Activated CD4-positive, alpha-beta memory T cell treated with anti-CD3 and anti-CD28 coated beads for 36 hours (primary cell): ENCODE measurements at regions of chrX and their contacts with region 1.

Region 1: DNA sequence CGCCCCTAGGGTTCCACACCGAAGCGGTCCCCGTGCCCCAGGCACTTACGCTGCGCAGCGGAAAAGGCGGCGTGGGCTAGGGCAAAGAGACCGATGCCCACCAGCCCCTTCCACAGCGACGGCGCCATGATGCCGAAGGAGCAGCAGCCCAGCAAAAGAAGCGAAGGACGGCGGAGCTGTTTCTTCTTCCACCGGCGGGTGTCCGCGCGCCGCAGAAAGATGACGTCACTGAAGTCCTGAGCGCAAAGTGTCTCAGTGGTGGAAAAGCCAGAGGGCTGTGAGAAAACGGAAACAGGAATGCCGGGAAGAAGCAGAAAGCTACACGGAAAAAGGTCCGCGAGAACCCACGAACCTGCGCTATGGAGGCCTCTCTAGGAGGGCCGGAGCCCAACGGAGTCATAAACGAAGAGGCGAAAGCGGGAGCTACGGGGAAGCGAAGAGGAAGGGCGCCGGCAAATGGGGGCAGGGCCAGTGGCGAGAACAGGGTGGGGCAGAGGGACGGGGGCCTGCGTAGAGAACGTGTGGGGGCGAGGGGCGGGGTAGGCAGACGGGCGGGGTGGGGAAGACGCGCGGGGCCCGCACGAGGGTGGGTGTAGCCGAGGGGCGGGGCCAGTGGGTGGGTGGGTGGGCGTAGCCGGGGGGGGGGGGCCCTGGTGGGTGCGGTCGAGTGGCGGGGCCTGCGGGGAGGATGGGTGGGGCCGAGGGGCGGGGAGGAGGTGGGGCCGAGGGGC is at the start of gene MMGT1:
- DNase-seq: peak; percentile 89
- H3K4me3 Mint-ChIP-seq: peak within 1 kb of the TSS; percentile 93
- H3K27ac Mint-ChIP-seq: peak within 1 kb of the TSS; percentile 93
- H3K4me1 Mint-ChIP-seq: peaks cover 37% of the 10 kb centered on the region
- H3K27me3 Mint-ChIP-seq: no peaks in the 10 kb centered on the region
- total RNA-seq, gene MMGT1: 20.6 to 21.4 TPM

Region 2: DNA sequence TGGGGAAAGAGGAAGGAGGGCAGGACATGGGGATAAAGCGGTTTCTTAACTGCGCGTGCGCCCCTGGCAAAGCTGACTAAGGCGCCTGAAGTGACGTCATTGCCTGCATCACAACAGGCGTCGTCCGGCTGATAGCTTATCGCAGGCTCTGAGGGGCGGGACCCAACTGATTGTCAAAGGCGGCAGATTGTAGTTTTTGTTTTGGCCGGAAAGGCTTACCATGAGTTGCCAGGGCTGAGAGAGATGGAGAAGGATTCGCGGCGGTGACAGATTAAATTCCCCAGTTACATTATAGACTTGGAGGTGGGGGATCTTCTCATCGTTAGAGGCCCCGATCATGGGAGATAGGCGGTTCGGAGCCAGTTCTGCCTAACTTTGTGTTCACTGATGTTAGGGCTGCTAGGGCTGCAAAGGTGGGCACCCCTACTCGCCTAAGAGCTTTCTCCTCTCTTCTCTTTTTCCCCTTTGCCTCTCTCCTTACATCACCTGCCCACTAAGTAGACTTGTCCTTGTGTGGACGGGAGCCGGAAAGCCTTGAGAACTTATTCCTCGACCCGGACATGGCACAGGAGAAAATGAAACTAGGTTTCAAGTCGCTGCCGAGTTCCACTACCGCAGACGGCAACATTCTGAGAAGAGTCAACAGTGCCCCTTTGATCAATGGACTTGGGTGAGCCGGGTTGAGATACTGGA is 1166.5 kb before region 1 on chrX:
- CTCF ChIA-PET with region 1: no interaction called
- POLR2A ChIA-PET with region 1: no interaction called
- intact Hi-C with region 1: loop called (anchors 5 kb)
- DNase-seq: peak; percentile 91
- H3K4me3 Mint-ChIP-seq: peak overlapping the region; percentile 90
- H3K27ac Mint-ChIP-seq: peak overlapping the region; percentile 93
- H3K4me1 Mint-ChIP-seq: peaks cover 20% of the 10 kb centered on the region
- H3K27me3 Mint-ChIP-seq: no peaks in the 10 kb centered on the region

Region 3: GRCh38 chrX:135985141-135985972 is 11.6 kb after region 1 on chrX and contains the start of gene SLC9A6:
- CTCF ChIA-PET with region 1: no interaction called
- POLR2A ChIA-PET with region 1: interaction called, 13 read pairs
- intact Hi-C with region 1: loop called (anchors 1 kb)
- DNase-seq: peak; percentile 77
- H3K4me3 Mint-ChIP-seq: peak within 1 kb of the TSS; percentile 89
- H3K27ac Mint-ChIP-seq: peak within 1 kb of the TSS; percentile 86
- H3K4me1 Mint-ChIP-seq: peaks cover 59% of the 10 kb centered on the region
- H3K27me3 Mint-ChIP-seq: no peaks in the 10 kb centered on the region
- total RNA-seq, gene SLC9A6: 14.3 to 14.5 TPM

Region 4: GRCh38 chrX:136065044-136065671 is 91.4 kb after region 1 on chrX:
- CTCF ChIA-PET with region 1: no interaction called
- POLR2A ChIA-PET with region 1: no interaction called
- intact Hi-C with region 1: no loop called
- DNase-seq: peak; percentile 46
- H3K4me3 Mint-ChIP-seq: peak overlapping the region; percentile 12
- H3K27ac Mint-ChIP-seq: peak overlapping the region; percentile 18
- H3K4me1 Mint-ChIP-seq: peaks cover 22% of the 10 kb centered on the region
- H3K27me3 Mint-ChIP-seq: no peaks in the 10 kb centered on the region

Region 5: GRCh38 chrX:136147315-136147901 is 173.7 kb after region 1 on chrX and contains the start of gene FHL1:
- CTCF ChIA-PET with region 1: no interaction called
- POLR2A ChIA-PET with region 1: no interaction called
- intact Hi-C with region 1: loop called (anchors 5 kb)
- DNase-seq: peak; percentile 68
- H3K4me3 Mint-ChIP-seq: peak within 1 kb of the TSS; percentile 78
- H3K27ac Mint-ChIP-seq: peak within 1 kb of the TSS; percentile 63
- H3K4me1 Mint-ChIP-seq: peaks cover 43% of the 10 kb centered on the region
- H3K27me3 Mint-ChIP-seq: no peaks in the 10 kb centered on the region
- total RNA-seq, gene FHL1: 33.9 to 37.5 TPM